Activated B cell treated with CpG ODN at 0.5 μM for 24 hours (primary cell): ENCODE measurements at regions of chr15 and their contacts with region 1.

Region 1: DNA sequence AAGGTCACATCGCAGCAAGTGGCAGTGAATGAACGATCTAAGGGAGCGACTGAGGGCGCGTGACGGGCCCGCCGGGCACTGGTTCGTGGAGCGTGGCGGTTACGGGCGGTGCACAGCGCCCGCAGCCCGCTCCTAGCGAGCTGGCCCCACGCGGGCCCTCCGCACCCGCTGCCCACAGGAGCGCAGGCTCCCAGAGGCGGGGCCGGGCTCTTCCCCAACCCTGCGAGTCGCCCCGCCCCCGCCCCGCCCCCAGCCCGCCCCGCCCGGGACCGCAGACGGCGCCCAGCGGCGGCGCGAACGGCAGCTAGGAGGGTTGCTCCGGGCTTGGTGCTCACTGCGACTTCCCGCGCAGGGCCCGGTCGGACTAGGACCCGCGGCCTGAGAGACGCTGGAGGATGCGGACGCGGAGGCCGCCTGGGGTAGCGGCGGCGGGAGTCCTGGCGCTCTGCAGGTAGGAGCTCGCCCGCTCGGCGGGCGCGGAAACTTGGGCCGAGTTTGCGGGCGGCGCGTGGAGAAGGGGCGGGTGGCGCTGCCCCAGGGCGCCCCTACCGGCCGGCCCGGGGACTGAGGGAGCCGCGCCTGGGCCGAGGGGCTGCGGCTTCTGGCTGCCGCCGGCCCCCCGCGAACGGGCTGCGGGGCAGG is at the start of gene C15orf39:
- DNase-seq: peak; percentile 83
- ATAC-seq: peak; percentile 58
- H3K4me3 Mint-ChIP-seq: peak within 1 kb of the TSS; percentile 90
- H3K27ac Mint-ChIP-seq: peak within 1 kb of the TSS; percentile 82
- H3K4me1 Mint-ChIP-seq: peaks cover 37% of the 10 kb centered on the region
- H3K27me3 Mint-ChIP-seq: peaks cover 4% of the 10 kb centered on the region
- CTCF ChIP-seq: no peak
- total RNA-seq, gene C15orf39: 59.6 and 73.2 TPM in 2 replicates

Region 2: DNA sequence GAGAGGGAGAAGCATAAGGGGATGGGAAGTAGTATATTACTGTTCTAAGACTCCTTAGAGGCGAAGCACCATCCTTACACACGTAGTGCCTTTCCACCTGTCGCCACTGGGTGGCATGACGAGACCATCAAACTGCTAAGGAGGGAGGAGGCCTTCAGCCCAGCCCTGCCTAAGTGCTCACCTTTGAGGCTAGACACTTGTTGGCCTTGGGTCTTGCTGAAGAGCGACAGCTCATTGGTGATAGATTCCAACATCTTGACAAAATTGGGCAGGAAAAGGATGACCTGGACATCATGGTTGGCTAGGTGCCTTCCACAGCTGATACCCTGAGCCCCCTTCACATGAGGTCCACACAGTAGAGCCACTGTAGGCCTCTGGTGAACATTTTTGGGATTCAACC is 566.5 kb before region 1 on chr15:
- CTCF ChIA-PET with region 1: no interaction called
- POLR2A ChIA-PET with region 1: no interaction called
- intact Hi-C with region 1: loop called (anchors 5 kb)
- DNase-seq: peak; percentile 61
- ATAC-seq: peak; percentile 64
- H3K4me3 Mint-ChIP-seq: no peak overlapping the region
- H3K27ac Mint-ChIP-seq: no peak overlapping the region
- H3K4me1 Mint-ChIP-seq: peaks cover 18% of the 10 kb centered on the region
- H3K27me3 Mint-ChIP-seq: no peaks in the 10 kb centered on the region
- CTCF ChIP-seq: no peak

Region 3: GRCh38 chr15:75029378-75030022 is 172.2 kb before region 1 on chr15:
- CTCF ChIA-PET with region 1: interaction called, 62 read pairs
- POLR2A ChIA-PET with region 1: interaction called, 20 read pairs
- intact Hi-C with region 1: loop called (anchors 1 kb)
- DNase-seq: peak; percentile 82
- ATAC-seq: peak; percentile 95
- H3K4me3 Mint-ChIP-seq: peak overlapping the region; percentile 61
- H3K27ac Mint-ChIP-seq: no peak overlapping the region
- H3K4me1 Mint-ChIP-seq: peaks cover 20% of the 10 kb centered on the region
- H3K27me3 Mint-ChIP-seq: no peaks in the 10 kb centered on the region
- CTCF ChIP-seq: no peak

Region 4: DNA sequence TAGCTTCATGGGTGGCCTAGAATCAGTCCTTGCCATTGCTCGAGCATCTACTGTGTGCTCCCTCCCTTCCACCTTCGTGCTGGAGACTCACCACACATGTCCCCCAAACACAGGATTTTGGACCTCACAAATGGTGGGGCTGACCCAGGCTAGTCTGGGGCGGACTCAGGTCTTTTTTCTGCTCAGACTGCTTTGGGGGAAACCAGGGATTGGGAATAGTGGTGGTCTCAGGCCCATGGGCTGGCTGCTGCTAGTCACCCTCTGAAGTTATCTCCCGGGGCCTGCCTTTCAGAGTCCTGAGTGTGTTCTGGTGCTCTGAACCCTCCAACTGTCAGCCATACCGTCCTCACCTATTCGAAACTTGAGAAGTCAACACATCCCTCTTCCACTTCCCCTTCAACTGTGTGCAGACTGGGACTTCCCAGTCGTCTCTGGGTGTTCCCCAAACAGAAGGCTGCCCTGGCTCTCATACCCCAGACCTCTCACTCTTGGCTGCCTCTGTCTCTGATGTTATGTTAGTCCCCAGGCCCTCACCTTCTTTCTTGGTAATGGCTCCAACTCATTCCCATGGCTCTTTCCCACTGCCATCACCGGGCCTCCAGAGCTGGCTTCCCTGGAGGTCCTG is 132.3 kb before region 1 on chr15:
- CTCF ChIA-PET with region 1: no interaction called
- POLR2A ChIA-PET with region 1: interaction called, 8 read pairs
- intact Hi-C with region 1: loop called (anchors 1 kb)
- DNase-seq: peak; percentile 44
- ATAC-seq: peak; percentile 100
- H3K4me3 Mint-ChIP-seq: peak overlapping the region; percentile 29
- H3K27ac Mint-ChIP-seq: peak overlapping the region; percentile 82
- H3K4me1 Mint-ChIP-seq: peaks cover 60% of the 10 kb centered on the region
- H3K27me3 Mint-ChIP-seq: no peaks in the 10 kb centered on the region
- CTCF ChIP-seq: no peak

Region 5: DNA sequence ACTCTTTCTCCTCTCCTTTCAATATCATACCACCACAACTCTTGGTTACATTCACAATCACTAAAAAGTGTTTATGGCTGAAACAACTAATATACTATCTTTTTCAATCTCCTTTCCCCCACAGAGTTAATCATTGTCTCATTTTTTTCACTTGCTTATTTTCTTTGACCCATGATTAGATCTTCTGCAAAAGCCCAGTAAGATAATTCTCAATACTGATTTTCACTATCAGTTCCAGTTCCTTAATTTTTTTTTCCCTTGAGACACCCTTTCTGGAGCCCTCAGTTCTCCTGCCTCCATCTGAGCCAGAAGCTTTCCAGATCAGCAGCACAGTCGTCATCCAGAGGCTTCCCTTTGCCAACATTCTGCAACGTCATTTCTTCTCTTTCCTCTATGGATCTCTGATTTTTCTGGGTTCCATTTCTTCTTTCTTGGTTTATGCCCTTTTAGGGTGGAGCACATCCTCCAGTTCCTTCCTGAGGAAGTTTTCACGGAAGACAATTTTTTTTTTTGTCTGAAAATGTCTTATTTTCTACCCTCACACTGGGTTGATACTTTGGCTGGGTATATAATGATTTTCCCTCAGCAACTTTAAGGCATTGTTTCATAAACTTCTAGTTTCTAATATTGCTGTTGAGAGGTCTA is 88.8 kb before region 1 on chr15:
- CTCF ChIA-PET with region 1: interaction called, 8 read pairs
- POLR2A ChIA-PET with region 1: interaction called, 24 read pairs
- intact Hi-C with region 1: loop called (anchors 1 kb)
- DNase-seq: no peak
- ATAC-seq: peak; percentile 35
- H3K4me3 Mint-ChIP-seq: peak overlapping the region; percentile 4
- H3K27ac Mint-ChIP-seq: peak overlapping the region; percentile 68
- H3K4me1 Mint-ChIP-seq: peaks cover 63% of the 10 kb centered on the region
- H3K27me3 Mint-ChIP-seq: no peaks in the 10 kb centered on the region
- CTCF ChIP-seq: no peak

Region 6: GRCh38 chr15:75307778-75308391 is 106.2 kb after region 1 on chr15:
- CTCF ChIA-PET with region 1: no interaction called
- POLR2A ChIA-PET with region 1: no interaction called
- intact Hi-C with region 1: loop called (anchors 10 kb)
- DNase-seq: no peak
- ATAC-seq: peak; percentile 25
- H3K4me3 Mint-ChIP-seq: no peak overlapping the region
- H3K27ac Mint-ChIP-seq: no peak overlapping the region
- H3K4me1 Mint-ChIP-seq: no peaks in the 10 kb centered on the region
- H3K27me3 Mint-ChIP-seq: peaks cover 51% of the 10 kb centered on the region
- CTCF ChIP-seq: no peak